Activated B cell treated with CpG ODN at 0.5 μM for 24 hours (primary cell): ENCODE measurements at regions of chr9 and their contacts with region 1.

Region 1: DNA sequence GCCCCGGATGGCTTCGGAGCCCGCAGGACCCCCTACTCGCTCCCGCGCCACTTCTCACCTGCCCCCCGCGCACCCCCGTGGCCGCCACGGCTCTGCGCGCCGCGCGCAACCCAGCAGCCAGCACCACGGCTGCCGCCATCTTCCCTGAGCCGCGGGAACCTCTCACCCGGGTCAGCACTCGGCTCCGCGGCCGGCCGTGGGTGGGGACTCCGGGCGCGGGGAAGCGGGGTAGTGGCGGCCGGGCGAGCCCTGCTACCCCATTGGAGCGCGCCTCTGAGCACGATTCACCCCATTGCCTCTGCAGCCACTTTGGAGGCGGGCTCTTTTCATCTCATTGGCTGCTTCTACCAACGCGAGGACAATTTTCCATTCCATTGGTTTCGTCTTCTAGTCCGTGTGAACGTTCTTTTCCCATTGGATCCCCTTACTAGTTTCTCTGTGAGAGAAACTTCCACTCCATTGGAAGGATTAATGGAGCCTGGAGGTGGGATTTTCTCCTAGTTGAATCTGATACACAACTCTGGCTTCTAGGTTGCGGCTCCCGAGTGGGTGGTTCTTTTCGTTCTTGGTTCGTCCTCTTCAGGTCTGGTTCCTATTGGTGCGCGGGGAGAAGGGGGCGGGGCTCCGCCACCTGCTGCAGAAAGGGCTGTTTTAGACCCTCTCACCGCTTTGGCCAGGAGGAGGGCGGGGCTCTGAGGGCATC is at the start of gene HINT2:
- DNase-seq: peak; percentile 90
- ATAC-seq: peak; percentile 83
- H3K4me3 Mint-ChIP-seq: peak within 1 kb of the TSS; percentile 98
- H3K27ac Mint-ChIP-seq: peak within 1 kb of the TSS; percentile 99
- H3K4me1 Mint-ChIP-seq: peaks cover 36% of the 10 kb centered on the region
- H3K27me3 Mint-ChIP-seq: no peaks in the 10 kb centered on the region
- CTCF ChIP-seq: no peak
- total RNA-seq, gene HINT2: 27.9 and 34.0 TPM in 2 replicates

Region 2: DNA sequence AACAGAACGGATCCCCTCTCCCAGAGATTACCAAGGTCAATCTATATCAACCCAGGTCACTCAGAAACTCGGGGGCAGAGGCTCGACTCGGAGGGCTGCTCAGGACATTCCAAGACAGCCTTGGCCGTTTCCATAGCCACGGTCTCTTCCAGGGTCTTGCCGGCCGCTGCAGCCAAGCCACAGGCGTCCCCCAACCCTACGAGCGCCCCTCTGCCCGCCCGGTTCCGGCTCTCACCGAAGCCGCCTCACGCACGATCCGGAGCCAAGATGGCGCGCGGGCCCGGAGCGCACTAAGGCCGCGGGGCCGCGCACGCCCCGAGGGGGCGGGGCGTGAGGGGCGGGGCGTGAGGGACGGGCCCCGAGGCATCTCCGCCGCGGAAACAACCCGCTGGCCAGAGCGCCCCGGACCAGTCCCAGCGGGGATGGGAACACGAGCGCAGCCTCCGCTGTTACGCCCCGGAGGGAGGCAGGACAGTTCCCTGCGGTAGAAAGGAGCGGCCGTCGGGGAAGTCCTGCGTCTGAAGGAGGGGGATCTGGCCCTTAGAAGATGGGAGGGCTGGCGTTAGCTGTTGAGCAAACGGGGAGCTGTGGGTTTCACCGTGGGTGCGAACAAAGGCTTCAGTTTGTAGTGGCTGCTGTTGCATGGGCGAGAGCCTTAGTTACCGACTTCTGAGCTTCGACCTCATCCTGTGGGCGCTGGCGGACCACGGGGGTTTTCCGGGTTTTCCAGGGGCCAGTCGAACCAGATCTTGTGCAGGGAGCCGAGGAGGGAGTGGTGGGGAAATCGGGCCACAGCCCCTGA is 1203.0 kb before region 1 on chr9 and contains the start of gene RPP25L:
- CTCF ChIA-PET with region 1: no interaction called
- POLR2A ChIA-PET with region 1: no interaction called
- intact Hi-C with region 1: loop called (anchors 10 kb)
- DNase-seq: peak; percentile 90
- ATAC-seq: peak; percentile 96
- H3K4me3 Mint-ChIP-seq: peak within 1 kb of the TSS; percentile 86
- H3K27ac Mint-ChIP-seq: peak within 1 kb of the TSS; percentile 90
- H3K4me1 Mint-ChIP-seq: peaks cover 19% of the 10 kb centered on the region
- H3K27me3 Mint-ChIP-seq: no peaks in the 10 kb centered on the region
- CTCF ChIP-seq: no peak
- total RNA-seq, gene RPP25L: 17.5 and 18.9 TPM in 2 replicates

Region 3: DNA sequence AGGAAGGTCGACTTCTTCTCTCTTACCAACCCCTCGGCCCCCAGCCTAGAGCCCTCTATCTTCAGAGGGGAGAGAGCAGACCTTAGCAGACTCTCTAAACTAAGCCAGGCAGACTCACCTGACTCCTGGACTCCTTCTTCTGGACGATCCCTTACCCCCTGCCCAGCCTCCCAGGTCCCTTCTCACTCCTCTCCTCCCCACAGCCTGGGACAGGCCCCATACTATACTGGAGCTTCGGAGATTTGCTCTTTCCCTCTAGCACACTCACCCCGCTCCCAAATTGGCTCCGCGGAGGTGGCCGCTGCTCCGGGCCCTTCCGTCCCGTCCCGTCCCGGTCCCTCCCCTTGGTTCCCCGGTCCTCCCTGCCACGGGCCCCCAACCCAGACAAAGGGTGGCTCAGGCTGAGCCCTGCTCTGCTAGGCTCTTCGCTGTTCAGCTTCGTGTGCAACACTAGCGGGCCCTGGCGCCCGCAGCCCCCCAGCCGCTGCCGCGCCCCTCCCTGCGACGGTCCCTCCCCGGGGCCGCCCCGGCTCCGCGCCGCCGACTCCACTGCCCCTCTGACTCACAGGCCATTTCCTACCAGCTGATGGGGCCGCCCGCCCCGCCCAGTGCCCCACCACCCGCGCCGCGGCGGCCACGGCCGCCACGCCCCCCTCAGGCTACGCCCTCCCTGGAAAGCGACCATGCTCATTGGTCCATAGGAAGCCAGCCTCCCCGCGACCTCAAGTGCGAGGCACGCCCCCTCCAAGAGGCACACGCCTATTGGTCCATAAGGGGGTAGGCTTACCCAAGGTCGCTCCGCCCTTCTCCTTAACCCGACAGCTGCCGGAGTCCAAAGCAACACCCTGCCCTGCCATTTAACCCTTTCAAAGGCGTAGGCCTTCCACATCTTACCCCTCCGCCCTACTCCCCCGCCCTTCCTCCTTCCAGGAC is 703.7 kb before region 1 on chr9:
- CTCF ChIA-PET with region 1: no interaction called
- POLR2A ChIA-PET with region 1: interaction called, 4 read pairs
- intact Hi-C with region 1: loop called (anchors 1 kb)
- DNase-seq: peak; percentile 86
- ATAC-seq: peak; percentile 81
- H3K4me3 Mint-ChIP-seq: peak overlapping the region; percentile 83
- H3K27ac Mint-ChIP-seq: peak overlapping the region; percentile 88
- H3K4me1 Mint-ChIP-seq: peaks cover 62% of the 10 kb centered on the region
- H3K27me3 Mint-ChIP-seq: no peaks in the 10 kb centered on the region
- CTCF ChIP-seq: no peak

Region 4: GRCh38 chr9:35748858-35749514 is 66.0 kb before region 1 on chr9 and contains the starts of genes GBA2 and RGP1:
- CTCF ChIA-PET with region 1: no interaction called
- POLR2A ChIA-PET with region 1: interaction called, 8 read pairs
- intact Hi-C with region 1: loop called (anchors 1 kb)
- DNase-seq: peak; percentile 84
- ATAC-seq: peak; percentile 84
- H3K4me3 Mint-ChIP-seq: peak within 1 kb of the TSS; percentile 93
- H3K27ac Mint-ChIP-seq: peak within 1 kb of the TSS; percentile 88
- H3K4me1 Mint-ChIP-seq: peaks cover 44% of the 10 kb centered on the region
- H3K27me3 Mint-ChIP-seq: no peaks in the 10 kb centered on the region
- CTCF ChIP-seq: no peak
- total RNA-seq, gene GBA2: 93.4 and 104 TPM in 2 replicates
- total RNA-seq, gene RGP1: 23.8 and 25.4 TPM in 2 replicates

Region 5: DNA sequence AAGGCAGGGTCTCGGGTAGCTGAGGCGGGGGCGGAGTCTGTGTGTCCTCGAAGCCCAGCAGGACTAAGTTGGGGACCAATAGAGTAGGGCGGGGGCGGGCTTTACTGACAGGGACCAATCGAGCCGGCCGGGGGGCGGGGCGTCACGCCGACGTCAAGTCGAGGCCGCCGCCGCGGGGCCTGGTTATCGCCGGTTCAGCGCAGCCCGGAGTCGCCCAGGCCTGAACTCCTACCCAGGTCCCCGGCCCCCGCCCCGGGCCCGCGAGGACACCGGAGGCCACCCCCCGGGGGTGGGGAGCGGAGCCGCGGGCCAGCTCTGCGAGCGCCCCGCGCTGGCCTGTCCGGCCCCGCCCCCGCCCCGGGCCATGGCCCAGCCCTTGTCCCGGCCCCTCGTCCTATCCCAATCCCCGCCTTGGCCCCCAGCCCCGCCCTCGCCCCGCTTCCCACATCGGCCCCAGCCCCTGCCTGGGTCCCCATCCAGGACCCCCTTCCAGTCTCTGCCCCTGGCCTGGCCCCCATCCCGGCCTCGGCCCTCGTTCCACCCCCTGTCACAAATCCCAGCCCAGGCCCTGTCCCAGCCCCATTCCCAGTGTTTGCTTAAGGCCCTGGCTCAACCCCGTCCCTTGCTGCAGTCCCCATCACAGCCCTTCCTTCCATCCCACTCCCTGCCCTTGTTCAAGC is 14.2 kb after region 1 on chr9 and contains the start of gene TMEM8B:
- CTCF ChIA-PET with region 1: interaction called, 31 read pairs
- POLR2A ChIA-PET with region 1: interaction called, 11 read pairs
- intact Hi-C with region 1: loop called (anchors 1 kb)
- DNase-seq: peak; percentile 89
- ATAC-seq: peak; percentile 92
- H3K4me3 Mint-ChIP-seq: peak within 1 kb of the TSS; percentile 95
- H3K27ac Mint-ChIP-seq: peak within 1 kb of the TSS; percentile 86
- H3K4me1 Mint-ChIP-seq: peaks cover 34% of the 10 kb centered on the region
- H3K27me3 Mint-ChIP-seq: no peaks in the 10 kb centered on the region
- CTCF ChIP-seq: no peak
- total RNA-seq, gene TMEM8B: 5.0 and 8.0 TPM in 2 replicates

Region 6: GRCh38 chr9:35882263-35882848 is 67.4 kb after region 1 on chr9:
- CTCF ChIA-PET with region 1: interaction called, 18 read pairs
- POLR2A ChIA-PET with region 1: no interaction called
- intact Hi-C with region 1: loop called (anchors 1 kb)
- DNase-seq: peak; percentile 74
- ATAC-seq: peak; percentile 58
- H3K4me3 Mint-ChIP-seq: no peak overlapping the region
- H3K27ac Mint-ChIP-seq: no peak overlapping the region
- H3K4me1 Mint-ChIP-seq: no peaks in the 10 kb centered on the region
- H3K27me3 Mint-ChIP-seq: peaks cover 10% of the 10 kb centered on the region
- CTCF ChIP-seq: no peak